ENCODE measurements at regions of chr10 and their contacts with region 1.

Region 1: GRCh38 chr10:86399879-86400704 is 33.5 kb upstream of the GRID1 start:
- DNase-seq: peak; percentile 99
- H3K4me3 ChIP-seq: peak overlapping the region; percentile 82
- H3K27ac ChIP-seq: peak overlapping the region; percentile 81
- H3K4me1 ChIP-seq: peaks cover 69% of the 10 kb centered on the region
- CTCF ChIP-seq: peak; percentile 90

Region 2: DNA sequence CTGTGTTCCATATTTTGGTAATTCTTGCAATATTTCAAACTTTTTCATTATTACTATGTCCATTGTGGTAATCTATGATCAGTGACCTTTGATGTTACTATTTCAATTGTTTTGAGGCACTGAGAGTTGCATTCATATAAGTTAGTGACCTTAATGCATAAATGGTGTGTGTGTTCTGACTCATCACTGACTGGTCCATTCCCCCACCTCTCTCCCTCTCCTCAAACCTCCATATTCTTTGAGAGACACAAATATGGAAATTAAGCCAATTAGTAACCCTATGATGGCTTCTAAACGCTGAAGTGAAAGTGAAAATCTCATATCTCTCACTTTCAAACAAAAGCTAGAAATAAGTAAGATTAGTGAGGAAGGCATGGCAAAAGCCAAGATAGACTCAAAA is 1332.1 kb before region 1 on chr10:
- CTCF ChIA-PET with region 1: no interaction called
- POLR2A ChIA-PET with region 1: no interaction called
- intact Hi-C with region 1: no loop called
- DNase-seq: no peak
- H3K4me3 ChIP-seq: no peak overlapping the region
- H3K27ac ChIP-seq: no peak overlapping the region
- H3K4me1 ChIP-seq: no peaks in the 10 kb centered on the region
- CTCF ChIP-seq: no peak

Region 3: DNA sequence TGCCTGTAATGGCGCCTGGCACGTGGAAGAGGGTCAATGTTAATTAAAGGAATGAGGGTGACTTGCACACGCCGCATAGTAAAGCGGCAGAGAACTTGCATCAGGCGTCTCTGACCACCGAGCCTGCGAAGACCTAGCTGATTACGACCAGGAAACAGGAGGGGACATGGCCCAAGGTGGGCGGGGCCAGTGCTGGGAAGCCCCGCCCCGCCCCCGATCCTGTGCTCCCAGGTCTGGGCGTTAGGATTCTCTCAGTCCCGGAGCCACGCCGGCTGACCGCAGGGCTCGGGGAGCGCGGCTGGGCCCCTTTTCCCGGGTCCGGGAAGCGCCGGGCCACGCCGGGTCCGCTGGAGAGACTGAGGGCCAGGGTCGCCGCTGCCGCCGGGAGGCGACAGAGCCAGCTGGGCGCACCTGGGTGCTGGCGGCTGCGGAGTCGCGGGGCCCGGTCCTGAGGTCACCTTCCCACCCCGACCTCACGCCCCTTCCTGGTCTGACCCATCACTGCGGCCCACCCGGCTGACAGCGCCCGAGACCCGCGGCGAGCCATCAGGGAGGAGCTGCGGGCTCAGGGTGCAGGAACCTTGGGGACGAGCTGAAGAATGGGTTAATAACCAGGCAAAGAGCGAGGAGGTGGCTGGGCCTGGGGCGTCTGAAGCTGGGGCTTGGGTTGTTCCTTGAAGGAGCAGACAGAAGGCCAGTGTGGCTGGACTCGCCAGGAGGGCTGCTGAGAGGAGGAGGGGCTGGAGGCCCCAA is 10.5 kb before region 1 on chr10:
- CTCF ChIA-PET with region 1: interaction called, 6 read pairs
- POLR2A ChIA-PET with region 1: interaction called, 69 read pairs
- intact Hi-C with region 1: loop called (anchors 1 kb)
- DNase-seq: peak; percentile 85
- H3K4me3 ChIP-seq: peak overlapping the region; percentile 76
- H3K27ac ChIP-seq: peak overlapping the region; percentile 95
- H3K4me1 ChIP-seq: peaks cover 60% of the 10 kb centered on the region
- CTCF ChIP-seq: peak; percentile 61

Region 4: GRCh38 chr10:86411281-86411841 is 11.3 kb after region 1 on chr10:
- CTCF ChIA-PET with region 1: interaction called, 13 read pairs
- POLR2A ChIA-PET with region 1: interaction called, 113 read pairs
- intact Hi-C with region 1: loop called (anchors 1 kb)
- DNase-seq: peak; percentile 91
- H3K4me3 ChIP-seq: peak overlapping the region; percentile 53
- H3K27ac ChIP-seq: peak overlapping the region; percentile 95
- H3K4me1 ChIP-seq: peaks cover 69% of the 10 kb centered on the region
- CTCF ChIP-seq: no peak

Region 5: GRCh38 chr10:86419101-86419500 is 19.0 kb after region 1 on chr10:
- CTCF ChIA-PET with region 1: interaction called, 11 read pairs
- POLR2A ChIA-PET with region 1: interaction called, 113 read pairs
- intact Hi-C with region 1: no loop called
- DNase-seq: peak; percentile 51
- H3K4me3 ChIP-seq: no peak overlapping the region
- H3K27ac ChIP-seq: peak overlapping the region; percentile 42
- H3K4me1 ChIP-seq: peaks cover 77% of the 10 kb centered on the region
- CTCF ChIP-seq: no peak

Region 6: GRCh38 chr10:86451604-86451960 is 51.5 kb after region 1 on chr10:
- CTCF ChIA-PET with region 1: no interaction called
- POLR2A ChIA-PET with region 1: interaction called, 4 read pairs
- intact Hi-C with region 1: loop called (anchors 2 kb)
- DNase-seq: no peak
- H3K4me3 ChIP-seq: no peak overlapping the region
- H3K27ac ChIP-seq: peak overlapping the region; percentile 19
- H3K4me1 ChIP-seq: peaks cover 49% of the 10 kb centered on the region
- CTCF ChIP-seq: no peak

Region 7: DNA sequence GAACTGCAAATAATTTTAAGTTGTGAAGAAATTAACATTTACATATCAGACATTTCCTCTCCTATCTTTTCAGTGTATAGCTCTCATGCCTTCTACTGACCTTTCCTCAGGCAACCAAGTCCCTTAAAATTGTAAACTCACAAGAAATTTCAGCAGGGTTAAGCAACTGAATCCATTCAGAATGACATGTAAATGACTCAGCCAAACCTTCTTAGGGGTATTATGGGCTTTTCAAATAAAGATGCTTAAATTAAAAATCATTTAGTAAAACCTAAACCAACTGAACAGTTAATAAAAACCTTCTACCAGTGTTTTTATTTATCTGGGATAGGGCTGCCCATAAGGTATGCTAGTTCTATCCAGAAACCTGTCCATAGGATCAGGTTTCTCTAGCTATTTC is 100.8 kb after region 1 on chr10:
- CTCF ChIA-PET with region 1: no interaction called
- POLR2A ChIA-PET with region 1: no interaction called
- intact Hi-C with region 1: no loop called
- DNase-seq: no peak
- H3K4me3 ChIP-seq: no peak overlapping the region
- H3K27ac ChIP-seq: no peak overlapping the region
- H3K4me1 ChIP-seq: peaks cover 15% of the 10 kb centered on the region
- CTCF ChIP-seq: no peak

Region 8: GRCh38 chr10:86521678-86522509 is 121.8 kb after region 1 on chr10 and contains the start of gene WAPL:
- CTCF ChIA-PET with region 1: no interaction called
- POLR2A ChIA-PET with region 1: interaction called, 5 read pairs
- intact Hi-C with region 1: loop called (anchors 1 kb)
- DNase-seq: peak; percentile 95
- H3K4me3 ChIP-seq: peak within 1 kb of the TSS; percentile 93
- H3K27ac ChIP-seq: peak within 1 kb of the TSS; percentile 70
- H3K4me1 ChIP-seq: peaks cover 56% of the 10 kb centered on the region
- CTCF ChIP-seq: no peak
- total RNA-seq, gene WAPL: 51.1 and 56.6 TPM in 2 replicates

Region 9: GRCh38 chr10:87094373-87095235 is 694.5 kb after region 1 on chr10 and contains the starts of genes GLUD1 and SHLD2:
- CTCF ChIA-PET with region 1: no interaction called
- POLR2A ChIA-PET with region 1: no interaction called
- intact Hi-C with region 1: loop called (anchors 10 kb)
- DNase-seq: peak; percentile 94
- H3K4me3 ChIP-seq: peak within 1 kb of the TSS; percentile 92
- H3K27ac ChIP-seq: peak within 1 kb of the TSS; percentile 80
- H3K4me1 ChIP-seq: peaks cover 44% of the 10 kb centered on the region
- CTCF ChIP-seq: no peak
- total RNA-seq, gene GLUD1: 86.5 and 98.5 TPM in 2 replicates
- total RNA-seq, gene SHLD2: 32.8 and 34.3 TPM in 2 replicates